ENCODE measurements at regions of chr17 and their contacts with region 1.

Region 1: DNA sequence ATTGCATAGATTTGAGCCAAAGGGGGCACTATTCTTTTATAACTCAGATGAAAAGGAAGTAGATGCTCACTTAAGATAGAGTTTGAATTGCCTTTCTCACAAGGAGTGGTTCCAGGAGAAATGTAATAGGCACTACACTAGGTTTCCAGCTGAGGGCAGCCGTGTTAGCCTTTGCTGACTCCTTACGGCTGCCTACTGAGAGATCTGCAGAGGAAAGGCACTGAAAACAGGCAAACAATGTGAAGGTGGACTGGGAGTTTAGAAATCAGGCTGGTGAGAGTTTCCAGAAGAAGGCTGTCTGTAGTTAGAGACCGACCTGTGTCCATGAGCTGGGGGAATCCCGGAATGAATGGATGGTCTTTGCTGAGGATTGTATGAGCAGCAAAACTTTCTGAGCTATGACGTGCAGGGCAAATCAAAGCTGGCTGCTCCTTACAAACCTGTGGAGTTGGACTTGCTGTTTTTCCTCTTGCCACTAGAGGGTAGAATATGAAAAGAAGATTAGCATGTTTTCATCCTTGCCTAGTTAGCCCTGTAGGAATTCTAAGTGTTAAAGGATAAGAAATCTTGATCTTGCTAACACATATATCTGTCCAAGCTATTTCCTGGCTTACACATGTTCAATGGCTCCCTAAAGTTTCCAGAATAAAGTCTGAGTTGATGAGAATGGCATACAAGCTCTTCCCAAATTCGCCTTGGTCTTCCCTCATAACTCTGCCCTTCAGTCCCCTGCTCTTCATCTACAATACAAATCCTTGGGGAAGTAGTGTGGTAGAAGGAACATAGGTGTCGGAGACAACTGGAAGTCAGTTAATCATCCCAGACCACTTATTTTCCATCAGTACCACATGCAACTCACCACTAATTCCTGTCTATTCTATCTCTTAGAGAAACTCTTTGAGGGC is 20.1 kb upstream of the TAOK1 start:
- DNase-seq: peak; percentile 38
- H3K4me3 ChIP-seq: peak overlapping the region; percentile 40
- CTCF ChIP-seq: peak; percentile 79

Region 2: DNA sequence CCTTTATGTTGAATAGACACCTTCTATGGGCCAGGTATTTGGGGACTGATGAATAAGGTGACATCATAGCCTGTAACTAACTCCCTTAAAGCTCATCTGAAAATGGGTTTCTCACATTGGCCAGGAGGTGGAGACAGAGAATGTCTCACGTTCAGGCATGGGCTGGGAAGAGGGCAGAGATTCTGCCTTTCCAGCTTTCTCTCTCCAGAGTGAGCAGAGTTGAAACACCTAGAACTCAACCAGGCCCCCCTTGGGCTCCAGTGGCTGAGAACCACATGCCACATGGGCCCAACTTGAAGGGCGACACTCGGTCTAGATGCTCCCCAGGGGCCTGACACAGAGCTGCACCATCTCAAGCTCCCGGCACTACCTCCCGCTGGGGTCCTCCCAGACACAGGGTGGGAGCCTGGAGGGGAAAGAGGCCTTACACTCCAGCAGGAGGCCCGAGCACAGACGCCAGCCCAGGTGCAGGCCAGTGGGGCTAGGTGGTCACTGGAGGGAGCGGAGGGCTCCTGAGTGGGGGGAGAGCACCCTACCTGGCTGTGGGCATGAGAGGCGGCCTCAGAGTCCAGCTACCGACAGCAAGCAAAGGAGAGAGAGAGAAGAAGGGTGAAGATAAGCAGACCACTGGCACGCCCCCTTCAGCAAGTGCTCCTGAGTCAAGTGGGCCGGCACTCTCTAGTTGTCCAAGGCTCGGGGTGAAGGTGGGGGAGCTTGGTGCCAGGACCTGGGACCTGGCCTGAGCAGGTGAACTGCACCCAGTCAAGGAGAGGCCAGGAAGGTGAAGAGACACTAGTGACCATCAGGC is 245.8 kb before region 1 on chr17:
- CTCF ChIA-PET with region 1: interaction called, 12 read pairs
- POLR2A ChIA-PET with region 1: no interaction called
- DNase-seq: no peak
- H3K4me3 ChIP-seq: no peak overlapping the region
- CTCF ChIP-seq: peak; percentile 72

Region 3: DNA sequence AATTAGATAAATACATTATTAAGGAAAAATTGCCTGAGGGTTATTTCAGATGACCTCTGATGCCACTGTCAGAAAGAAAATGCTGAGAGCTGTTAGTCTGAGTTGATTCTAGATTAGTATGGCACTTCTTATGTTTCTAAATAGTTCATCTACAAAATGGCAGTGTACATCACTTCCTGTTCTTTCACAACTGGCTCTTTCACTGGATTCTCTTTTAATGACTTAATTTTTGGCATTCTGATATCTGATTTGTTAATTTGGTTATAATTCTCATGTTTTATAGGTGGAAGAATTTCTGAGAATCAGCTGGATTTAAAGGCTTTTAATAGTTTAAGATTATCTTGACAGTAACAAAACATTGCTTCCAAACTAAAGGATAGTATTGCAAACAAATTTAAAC is 23.4 kb after region 1 on chr17:
- CTCF ChIA-PET with region 1: interaction called, 13 read pairs
- POLR2A ChIA-PET with region 1: no interaction called
- DNase-seq: no peak
- H3K4me3 ChIP-seq: no peak overlapping the region
- CTCF ChIP-seq: no peak

Region 4: DNA sequence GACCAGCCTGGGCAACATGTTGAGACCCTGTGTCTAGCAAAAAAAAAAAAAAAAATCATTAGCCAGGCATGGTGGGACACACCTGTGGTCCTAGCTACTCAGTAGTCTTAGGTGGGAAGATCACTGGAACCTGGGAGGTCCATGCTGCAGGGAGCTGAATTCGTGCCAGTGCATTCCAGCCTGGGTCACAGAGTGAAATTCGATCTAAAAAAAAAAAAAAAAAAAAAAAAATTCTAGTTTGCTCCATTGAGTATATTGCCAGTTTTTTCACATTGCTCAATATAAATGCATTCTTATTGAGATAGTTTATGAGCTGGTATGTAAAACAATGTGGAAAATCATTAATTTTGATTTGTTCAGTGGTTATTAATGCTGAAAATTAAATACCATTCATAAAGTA is 144.7 kb after region 1 on chr17:
- CTCF ChIA-PET with region 1: interaction called, 14 read pairs
- POLR2A ChIA-PET with region 1: no interaction called
- DNase-seq: no peak
- H3K4me3 ChIP-seq: no peak overlapping the region
- CTCF ChIP-seq: no peak

Region 5: DNA sequence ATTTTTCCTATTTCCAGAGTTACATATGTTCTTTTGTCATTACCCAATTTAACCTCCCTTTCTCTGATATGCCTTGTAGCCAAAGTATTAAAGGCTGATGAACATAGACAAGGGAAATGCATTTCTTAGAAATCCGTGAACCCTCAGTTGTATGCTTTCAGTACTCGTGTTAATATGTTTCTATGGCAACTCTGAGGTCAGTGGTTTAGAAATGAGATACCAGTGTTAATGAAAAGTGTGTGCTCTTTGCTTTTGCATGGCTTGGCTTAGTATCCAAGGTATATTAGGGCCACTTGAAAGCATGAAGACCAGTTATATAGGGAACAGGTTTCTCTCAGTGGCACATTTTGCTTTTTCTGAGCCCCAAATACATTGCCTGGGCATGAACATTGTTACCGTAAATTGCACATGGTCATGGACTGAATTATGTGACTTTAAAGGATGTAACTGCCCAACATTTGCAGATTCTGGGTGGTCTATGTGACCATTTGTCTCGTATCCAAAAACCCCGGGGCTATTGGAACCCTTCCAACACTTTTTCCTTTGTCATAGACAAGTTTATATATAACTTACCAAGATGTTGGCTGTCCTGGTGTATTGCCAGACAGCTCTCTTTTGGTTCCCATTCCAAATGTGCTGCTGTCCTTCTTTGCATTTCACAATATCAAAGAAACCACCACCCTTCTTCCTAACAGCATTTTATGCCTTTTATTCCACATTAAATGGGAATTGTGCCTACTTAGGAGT is 179.3 kb after region 1 on chr17:
- CTCF ChIA-PET with region 1: interaction called, 28 read pairs
- POLR2A ChIA-PET with region 1: no interaction called
- DNase-seq: no peak
- H3K4me3 ChIP-seq: no peak overlapping the region
- CTCF ChIP-seq: no peak

Region 6: GRCh38 chr17:29579866-29580771 is 210.0 kb after region 1 on chr17:
- CTCF ChIA-PET with region 1: interaction called, 222 read pairs
- POLR2A ChIA-PET with region 1: no interaction called
- DNase-seq: no peak
- H3K4me3 ChIP-seq: no peak overlapping the region
- CTCF ChIP-seq: peak; percentile 95

Measured in AG04449 (cell line).